ENCODE measurements at regions of chr3 and their contacts with region 1.

Region 1: GRCh38 chr3:11956781-11957180 is 47.4 kb upstream of the SYN2 start:
- DNase-seq: no peak
- H3K4me3 ChIP-seq: no peak overlapping the region
- H3K27ac ChIP-seq: no peak overlapping the region
- H3K4me1 ChIP-seq: peaks cover 0 to 6% of the 10 kb centered on the region in 2 donors
- H3K27me3 ChIP-seq: no peaks in the 10 kb centered on the region
- CTCF ChIP-seq: no peak
- POLR2A ChIP-seq: no peak

Region 2: DNA sequence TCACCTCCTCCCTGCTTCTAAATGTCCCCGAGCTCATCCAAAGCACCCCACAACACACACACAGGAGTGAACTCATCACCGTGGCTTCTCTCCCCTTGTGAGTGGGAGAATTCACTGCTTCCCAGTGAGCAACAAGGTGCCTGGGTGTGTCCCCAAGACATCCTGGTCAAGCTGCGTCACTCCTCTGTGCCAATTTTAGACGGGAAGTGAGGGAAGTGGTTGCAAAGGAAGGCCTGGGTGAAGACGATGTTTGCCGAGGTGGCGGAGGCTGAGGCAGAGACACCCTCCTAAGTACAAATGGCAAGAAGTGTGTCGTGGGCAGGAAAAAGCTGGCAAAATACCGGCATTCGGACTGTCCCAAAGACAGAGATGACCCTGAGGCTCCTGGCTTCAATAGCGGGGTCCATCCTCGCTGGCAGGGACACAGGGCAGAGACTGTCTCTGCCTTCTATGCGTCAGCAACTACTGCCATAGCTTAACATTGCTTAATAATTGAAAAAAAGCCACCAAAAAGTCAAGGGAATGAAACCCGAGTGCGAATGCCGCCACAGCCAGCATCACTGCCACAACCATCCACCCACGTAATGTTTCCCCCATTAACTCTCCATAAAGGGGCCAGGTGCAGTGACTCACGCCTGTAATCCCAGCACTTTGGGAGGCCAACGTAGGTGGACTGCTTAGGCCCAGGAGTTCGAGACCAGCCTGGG is 385.8 kb before region 1 on chr3:
- intact Hi-C with region 1: loop called (anchors 5 kb)
- DNase-seq: no peak
- H3K4me3 ChIP-seq: peak overlapping the region in 1 of 3 donors; percentile 23
- H3K27ac ChIP-seq: peak overlapping the region; percentile 93 to 100
- H3K4me1 ChIP-seq: peaks cover 13 to 14% of the 10 kb centered on the region in 2 donors
- H3K27me3 ChIP-seq: no peaks in the 10 kb centered on the region
- CTCF ChIP-seq: no peak
- POLR2A ChIP-seq: no peak

Region 3: GRCh38 chr3:12896063-12896985 is 939.5 kb after region 1 on chr3:
- intact Hi-C with region 1: no loop called
- DNase-seq: no peak
- H3K4me3 ChIP-seq: no peak overlapping the region
- H3K27ac ChIP-seq: no peak overlapping the region
- H3K4me1 ChIP-seq: no peaks in the 10 kb centered on the region
- H3K27me3 ChIP-seq: no peaks in the 10 kb centered on the region
- CTCF ChIP-seq: no peak
- POLR2A ChIP-seq: no peak

Measured in breast epithelium (tissue), 4 donors.